Cardiac septum (tissue), 1 donor: ENCODE measurements at regions of chr5 and their contacts with region 1.

Region 1: DNA sequence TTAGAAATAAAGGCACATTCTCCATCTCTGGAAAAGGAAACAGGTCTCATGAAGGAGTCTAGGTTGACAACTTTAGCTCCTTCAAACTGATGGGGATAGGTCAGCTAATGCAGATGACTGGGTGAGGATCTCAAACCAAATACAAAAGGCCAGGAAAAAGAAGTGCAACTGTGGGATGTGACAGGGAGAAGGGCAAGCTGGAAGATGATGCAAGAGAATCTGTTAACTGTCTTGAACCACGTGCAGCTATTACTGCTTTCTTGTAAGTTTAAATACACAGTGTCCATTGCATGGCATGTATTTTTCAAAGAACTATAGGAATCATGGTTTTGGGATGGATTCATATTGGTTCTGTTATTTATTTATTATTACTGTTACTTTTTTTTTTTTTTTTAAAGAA is 331.8 kb downstream of the NDUFS4 start:
- DNase-seq: no peak

Region 2: GRCh38 chr5:52840277-52841050 is 1051.8 kb before region 1 on chr5:
- intact Hi-C with region 1: no loop called
- DNase-seq: peak; percentile 76

Region 3: GRCh38 chr5:53936481-53937352 is 44.5 kb after region 1 on chr5:
- intact Hi-C with region 1: loop called (anchors 5 kb)
- DNase-seq: no peak